Naive thymus-derived CD8-positive, alpha-beta T cell (primary cell): ENCODE measurements at regions of chr17 and their contacts with region 1.

Region 1: GRCh38 chr17:82230627-82231311 is 1.9 kb downstream of the SLC16A3 start:
- DNase-seq: peak in 5 of 10 donors; percentile 46 to 78 (median 51)
- ATAC-seq: peak; percentile 29 to 36
- H3K4me3 Mint-ChIP-seq: peak overlapping the region in 6 of 10 donors; percentile 65 to 86 (median 79)
- H3K27ac Mint-ChIP-seq: peak overlapping the region in 1 of 10 donors; percentile 41
- H3K4me1 Mint-ChIP-seq: peaks cover 6 to 19% (median 11%) of the 10 kb centered on the region in 4 donors
- H3K27me3 Mint-ChIP-seq: no peaks in the 10 kb centered on the region

Region 2: DNA sequence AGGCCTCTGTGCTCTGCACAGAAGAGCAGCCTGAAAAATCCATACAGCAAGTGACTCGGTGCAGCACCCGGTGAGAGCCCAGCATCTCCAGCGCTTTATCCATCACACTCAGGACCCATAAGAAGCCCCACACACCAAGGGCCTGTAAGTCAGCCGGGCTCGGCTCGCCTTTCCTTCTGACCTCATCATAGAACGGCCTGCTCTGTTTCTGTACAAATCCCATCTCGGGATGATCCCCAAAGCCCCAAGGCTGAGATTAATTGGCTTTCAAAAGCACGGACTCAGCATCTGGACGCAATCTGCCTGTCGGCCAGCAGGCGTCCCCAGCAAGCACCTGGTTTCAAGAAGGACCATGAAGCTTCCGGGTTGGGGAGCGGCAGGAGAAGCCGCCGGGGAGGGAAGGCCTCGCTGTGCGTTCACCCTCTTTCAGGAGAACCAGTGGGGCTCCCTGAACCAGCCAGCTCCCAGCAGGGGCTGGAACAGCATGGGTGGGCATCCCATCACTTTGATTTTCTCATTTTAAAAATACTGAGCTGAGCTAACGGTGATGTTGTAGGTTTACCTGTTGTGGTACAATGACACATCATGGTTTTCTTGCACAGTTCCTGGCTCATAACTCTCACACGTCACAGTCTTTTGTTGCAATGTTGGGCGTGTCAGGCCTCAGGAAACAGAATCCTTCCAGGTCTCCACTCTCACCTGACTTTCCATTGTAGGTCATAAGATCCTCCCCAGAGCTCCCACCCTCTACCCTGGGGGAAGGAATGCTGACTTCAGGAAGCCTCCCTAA is 24.9 kb before region 1 on chr17:
- POLR2A ChIA-PET with region 1: interaction called, 13 read pairs
- DNase-seq: peak; percentile 60 to 89 (median 75)
- ATAC-seq: peak; percentile 82 to 89
- H3K4me3 Mint-ChIP-seq: peak overlapping the region; percentile 1 to 78 (median 60)
- H3K27ac Mint-ChIP-seq: peak overlapping the region; percentile 92 to 99 (median 97)
- H3K4me1 Mint-ChIP-seq: peaks cover 12 to 46% (median 35%) of the 10 kb centered on the region in 4 donors
- H3K27me3 Mint-ChIP-seq: no peaks in the 10 kb centered on the region

Region 3: GRCh38 chr17:82212331-82213250 is 18.2 kb before region 1 on chr17 and contains the start of gene CCDC57:
- POLR2A ChIA-PET with region 1: interaction called, 21 read pairs
- DNase-seq: peak in 9 of 10 donors; percentile 41 to 71 (median 52)
- ATAC-seq: peak; percentile 59 to 76
- H3K4me3 Mint-ChIP-seq: peak within 1 kb of the TSS; percentile 70 to 91 (median 83)
- H3K27ac Mint-ChIP-seq: peak within 1 kb of the TSS; percentile 67 to 94 (median 86)
- H3K4me1 Mint-ChIP-seq: peaks cover 6 to 51% (median 32%) of the 10 kb centered on the region in 4 donors
- H3K27me3 Mint-ChIP-seq: no peaks in the 10 kb centered on the region
- polyA plus RNA-seq, gene CCDC57: 39.6 to 53.5 (median 42.4) TPM